ENCODE measurements at regions of chr12 and their contacts with region 1.

Region 1: GRCh38 chr12:34033628-34034282 is 11.5 kb downstream of the ALG10 start:
- DNase-seq: no peak
- H3K4me3 ChIP-seq: no peak overlapping the region
- H3K27ac ChIP-seq: no peak overlapping the region
- H3K4me1 ChIP-seq: no peaks in the 10 kb centered on the region
- H3K27me3 ChIP-seq: no peaks in the 10 kb centered on the region
- CTCF ChIP-seq: peak; percentile 37 to 51

Region 2: DNA sequence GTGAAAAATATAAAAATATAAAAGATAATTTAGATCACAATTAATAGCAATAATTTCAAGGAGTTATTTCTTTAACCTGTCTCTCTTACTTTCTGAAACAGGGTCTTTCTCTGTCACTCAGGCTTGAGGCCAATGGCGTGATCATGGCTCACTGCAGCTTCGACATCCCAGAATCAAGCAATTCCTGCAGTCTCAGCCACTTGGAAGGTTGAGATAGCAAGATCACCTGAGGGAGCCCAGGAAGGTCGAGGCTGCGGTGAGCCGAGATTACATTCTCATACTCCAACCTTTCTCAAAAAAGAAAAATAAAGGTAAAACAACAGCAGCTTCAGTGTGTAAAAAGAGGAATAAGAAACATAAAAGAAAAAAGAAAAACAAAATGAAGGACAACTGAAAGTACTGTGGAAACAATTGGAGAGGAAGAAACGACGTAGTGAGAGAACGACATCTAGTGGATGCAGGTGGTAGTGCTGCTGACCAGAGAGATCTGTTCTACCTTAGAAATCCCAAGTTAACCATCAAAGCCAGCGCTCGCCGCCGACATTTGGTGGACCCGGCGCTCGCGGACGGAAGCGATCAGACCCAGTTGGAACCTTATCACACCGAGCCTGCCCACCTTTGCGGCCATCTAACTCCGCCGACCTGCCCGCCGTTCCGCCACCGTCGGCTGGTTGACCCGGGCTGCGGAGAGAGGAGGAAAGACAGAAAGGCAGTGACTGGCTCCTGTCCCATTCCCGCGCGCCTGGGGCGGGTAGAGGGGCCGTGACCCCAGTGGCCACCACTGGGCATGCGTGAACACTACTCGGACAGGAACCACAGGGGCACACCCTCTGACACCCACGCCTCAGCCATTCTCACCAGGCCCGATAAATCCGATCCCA is 184.7 kb after region 1 on chr12:
- CTCF ChIA-PET with region 1: no interaction called
- dilution Hi-C with region 1: no loop called
- in situ Hi-C with region 1: no loop called
- intact Hi-C with region 1: loop called (anchors 1 kb)
- DNase-seq: peak; percentile 50
- H3K4me3 ChIP-seq: peak overlapping the region; percentile 57 to 66 (median 60)
- H3K27ac ChIP-seq: no peak overlapping the region
- H3K4me1 ChIP-seq: peaks cover 7% of the 10 kb centered on the region
- H3K27me3 ChIP-seq: no peaks in the 10 kb centered on the region
- CTCF ChIP-seq: peak; percentile 84 to 88

Region 3: GRCh38 chr12:34625116-34625515 is 591.4 kb after region 1 on chr12:
- CTCF ChIA-PET with region 1: no interaction called
- dilution Hi-C with region 1: no loop called
- in situ Hi-C with region 1: no loop called
- intact Hi-C with region 1: loop called (anchors 5 kb)
- DNase-seq: peak; percentile 1
- H3K4me3 ChIP-seq: no peak overlapping the region
- H3K27ac ChIP-seq: no peak overlapping the region
- H3K4me1 ChIP-seq: no peaks in the 10 kb centered on the region
- H3K27me3 ChIP-seq: no peaks in the 10 kb centered on the region
- CTCF ChIP-seq: peak; percentile 10 to 44

Measured in mammary epithelial cell (primary cell).